GM12878 (cell line): ENCODE measurements at regions of chr1 and their contacts with region 1.

Region 1: DNA sequence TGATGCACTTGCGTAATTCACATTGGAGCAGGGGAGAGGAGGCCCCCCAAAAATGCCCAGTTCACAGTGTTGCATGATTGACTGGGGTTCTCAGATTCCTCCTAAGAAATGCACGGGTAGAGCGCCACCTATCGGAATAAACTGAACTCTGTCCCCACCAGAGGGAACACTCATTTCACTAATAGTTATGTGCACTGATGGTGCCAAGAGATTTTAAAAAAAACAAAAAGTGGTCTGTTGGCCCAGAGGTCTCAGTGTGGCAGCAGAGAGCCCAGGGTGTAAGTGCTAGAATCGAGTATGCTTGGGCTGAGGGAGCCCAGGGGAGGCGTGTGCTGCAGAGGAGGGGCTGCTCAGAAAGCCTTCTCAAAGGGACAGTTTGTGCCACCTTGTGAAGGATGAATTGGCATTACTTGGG is 6.9 kb downstream of the PINK1 start:
- DNase-seq: peak; percentile 11
- ATAC-seq: peak; percentile 92
- H3K4me3 ChIP-seq: no peak overlapping the region
- H3K27ac ChIP-seq: no peak overlapping the region
- H3K4me1 ChIP-seq: no peaks in the 10 kb centered on the region
- H3K27me3 ChIP-seq: no peaks in the 10 kb centered on the region
- CTCF ChIP-seq: peak; percentile 73 to 81 (median 77)
- EP300 ChIP-seq: no peak
- POLR2A ChIP-seq: no peak
- RAD21 ChIP-seq: peak; percentile 70

Region 2: GRCh38 chr1:19750101-19750881 is 889.9 kb before region 1 on chr1:
- CTCF ChIA-PET with region 1: no interaction called
- POLR2A ChIA-PET with region 1: no interaction called
- RAD21 ChIA-PET with region 1: no interaction called
- SMC1A ChIA-PET with region 1: no interaction called
- in situ Hi-C with region 1: no loop called
- intact Hi-C with region 1: no loop called
- DNase-seq: no peak
- ATAC-seq: no peak
- H3K4me3 ChIP-seq: no peak overlapping the region
- H3K27ac ChIP-seq: no peak overlapping the region
- H3K4me1 ChIP-seq: no peaks in the 10 kb centered on the region
- H3K27me3 ChIP-seq: no peaks in the 10 kb centered on the region
- CTCF ChIP-seq: no peak
- EP300 ChIP-seq: no peak
- POLR2A ChIP-seq: no peak
- RAD21 ChIP-seq: no peak

Region 3: DNA sequence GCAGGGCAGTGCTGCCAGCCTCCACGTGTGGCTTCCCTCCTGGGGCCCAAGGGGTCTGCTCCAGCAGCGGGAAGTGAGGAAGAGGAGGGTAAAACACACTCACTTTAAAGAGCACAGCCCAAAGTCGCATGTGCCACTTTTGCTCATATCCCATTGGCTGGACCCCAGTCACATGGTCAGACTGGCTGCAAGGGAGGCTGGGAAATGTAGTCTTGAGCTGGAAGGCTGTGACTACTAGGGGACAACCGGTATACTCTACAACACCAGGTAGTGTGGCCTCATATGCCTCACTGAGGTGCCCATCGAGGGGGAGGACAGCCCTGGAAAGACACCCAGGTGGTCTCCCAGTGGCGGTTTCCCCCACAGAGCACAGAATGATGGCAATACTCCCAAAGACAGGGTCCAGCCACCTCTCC is 199.4 kb before region 1 on chr1:
- CTCF ChIA-PET with region 1: no interaction called
- POLR2A ChIA-PET with region 1: no interaction called
- RAD21 ChIA-PET with region 1: no interaction called
- SMC1A ChIA-PET with region 1: no interaction called
- in situ Hi-C with region 1: no loop called
- intact Hi-C with region 1: no loop called
- DNase-seq: no peak
- ATAC-seq: peak; percentile 93
- H3K4me3 ChIP-seq: no peak overlapping the region
- H3K27ac ChIP-seq: no peak overlapping the region
- H3K4me1 ChIP-seq: no peaks in the 10 kb centered on the region
- H3K27me3 ChIP-seq: no peaks in the 10 kb centered on the region; a peak in 1 of 4 replicates
- CTCF ChIP-seq: no peak
- EP300 ChIP-seq: no peak
- POLR2A ChIP-seq: no peak
- RAD21 ChIP-seq: no peak

Region 4: GRCh38 chr1:20574686-20575540 is 65.3 kb before region 1 on chr1:
- CTCF ChIA-PET with region 1: interaction called, 18 read pairs
- POLR2A ChIA-PET with region 1: no interaction called
- RAD21 ChIA-PET with region 1: no interaction called
- SMC1A ChIA-PET with region 1: no interaction called
- in situ Hi-C with region 1: no loop called
- intact Hi-C with region 1: loop called (anchors 1 kb)
- DNase-seq: no peak
- ATAC-seq: peak; percentile 84
- H3K4me3 ChIP-seq: no peak overlapping the region
- H3K27ac ChIP-seq: no peak overlapping the region
- H3K4me1 ChIP-seq: no peaks in the 10 kb centered on the region
- H3K27me3 ChIP-seq: no peaks in the 10 kb centered on the region
- CTCF ChIP-seq: peak; percentile 48 to 62 (median 61)
- EP300 ChIP-seq: no peak
- POLR2A ChIP-seq: no peak
- RAD21 ChIP-seq: peak; percentile 41